HepG2 (cell line): ENCODE measurements at regions of chr3 and their contacts with region 1.

Region 1: GRCh38 chr3:43559963-43560362 is 61.8 kb downstream of the ANO10 start:
- DNase-seq: no peak
- ATAC-seq: no peak; the same call in 2 of the 3 replicates
- H3K4me3 ChIP-seq: no peak overlapping the region
- H3K27ac ChIP-seq: no peak overlapping the region
- H3K4me1 ChIP-seq: no peaks in the 10 kb centered on the region
- H3K27me3 ChIP-seq: no peaks in the 10 kb centered on the region
- CTCF ChIP-seq: 0 out of 2 replicates have a peak, but pooled peaks have one; percentile 7
- EP300 ChIP-seq: no peak
- POLR2A ChIP-seq: no peak
- RAD21 ChIP-seq: no peak

Region 2: GRCh38 chr3:43497905-43498365 is 62.0 kb before region 1 on chr3:
- CTCF ChIA-PET with region 1: no interaction called
- POLR2A ChIA-PET with region 1: no interaction called
- in situ Hi-C with region 1: no loop called
- intact Hi-C with region 1: no loop called
- DNase-seq: no peak
- ATAC-seq: no peak
- H3K4me3 ChIP-seq: no peak overlapping the region
- H3K27ac ChIP-seq: no peak overlapping the region
- H3K4me1 ChIP-seq: no peaks in the 10 kb centered on the region
- H3K27me3 ChIP-seq: no peaks in the 10 kb centered on the region; a peak in 1 of 5 replicates
- CTCF ChIP-seq: no peak
- EP300 ChIP-seq: no peak
- POLR2A ChIP-seq: no peak
- RAD21 ChIP-seq: no peak

Region 3: GRCh38 chr3:44284949-44285348 is 725.0 kb after region 1 on chr3:
- CTCF ChIA-PET with region 1: no interaction called
- POLR2A ChIA-PET with region 1: no interaction called
- in situ Hi-C with region 1: no loop called
- intact Hi-C with region 1: loop called (anchors 5 kb)
- DNase-seq: no peak
- ATAC-seq: no peak
- H3K4me3 ChIP-seq: no peak overlapping the region
- H3K27ac ChIP-seq: no peak overlapping the region
- H3K4me1 ChIP-seq: no peaks in the 10 kb centered on the region
- H3K27me3 ChIP-seq: peaks cover 0 to 5% of the 10 kb centered on the region in 2 experiments; a peak in 1 of 5 replicates
- CTCF ChIP-seq: no peak
- EP300 ChIP-seq: no peak
- POLR2A ChIP-seq: no peak
- RAD21 ChIP-seq: no peak